ENCODE measurements at regions of chr1 and their contacts with region 1.

Region 1: DNA sequence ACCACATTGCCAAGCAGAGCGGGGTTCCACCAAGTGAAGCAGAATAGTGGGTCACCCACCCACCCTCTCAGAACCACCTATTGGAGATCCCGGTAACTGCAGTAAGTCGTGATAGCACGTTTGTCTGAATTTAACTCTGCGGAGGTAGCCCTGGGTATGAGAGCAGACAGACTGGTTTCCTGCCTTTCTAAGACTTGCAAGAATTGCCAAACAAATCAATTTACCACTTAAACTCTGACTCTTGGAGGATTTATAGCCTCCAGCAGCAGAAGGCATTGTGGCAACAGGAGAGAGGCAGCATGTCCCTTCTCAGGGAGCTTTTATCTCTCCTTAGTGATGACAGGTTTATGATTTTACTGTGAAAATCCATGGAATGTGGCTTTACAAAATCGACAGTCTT is 287.9 kb upstream of the FMN2 start:
- DNase-seq: no peak
- ATAC-seq: no peak
- H3K4me3 ChIP-seq: no peak overlapping the region
- H3K4me3 Mint-ChIP-seq: no peak overlapping the region
- H3K27ac ChIP-seq: no peak overlapping the region
- H3K27ac Mint-ChIP-seq: peak overlapping the region in 1 of 9 donors; percentile 4
- H3K4me1 ChIP-seq: no peaks in the 10 kb centered on the region
- H3K4me1 Mint-ChIP-seq: peaks cover 2 to 21% (median 11%) of the 10 kb centered on the region in 7 donors
- H3K27me3 ChIP-seq: no peaks in the 10 kb centered on the region
- H3K27me3 Mint-ChIP-seq: no peaks in the 10 kb centered on the region

Region 2: DNA sequence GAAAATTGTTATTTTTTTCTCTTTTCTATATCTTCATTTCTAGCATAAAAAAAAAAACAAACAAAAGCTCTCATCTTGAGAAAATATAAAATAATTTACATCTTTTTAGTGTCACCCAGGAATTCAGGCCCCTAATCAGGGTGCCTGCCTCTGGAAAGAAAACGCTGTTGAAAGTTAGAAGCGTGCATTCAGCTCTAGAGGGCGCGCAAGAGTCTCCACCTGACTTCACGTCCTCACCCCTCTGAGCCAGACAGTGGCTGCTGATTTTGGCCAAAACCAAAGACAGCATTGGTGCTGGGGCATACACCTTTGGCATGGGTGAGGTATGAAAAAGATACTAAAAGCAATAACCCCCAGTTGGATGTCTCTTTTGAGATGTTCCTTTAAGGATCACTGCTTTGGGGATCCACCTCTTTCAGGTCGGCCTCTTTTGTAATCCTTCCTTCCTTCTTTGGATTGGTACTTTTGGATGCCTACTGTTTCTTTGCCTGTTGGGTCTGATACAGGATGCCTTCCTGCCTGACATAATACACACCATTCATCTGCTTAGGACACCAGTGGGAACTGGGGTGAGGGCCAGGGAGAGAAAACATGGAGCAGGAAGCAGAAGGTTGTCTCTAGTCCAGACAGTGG is 495.0 kb before region 1 on chr1:
- CTCF ChIA-PET with region 1: no interaction called
- POLR2A ChIA-PET with region 1: no interaction called
- intact Hi-C with region 1: loop called in 1 of 2 experiments (anchors 1 kb)
- DNase-seq: peak in 5 of 9 donors; percentile 3 to 19 (median 7)
- ATAC-seq: peak; percentile 51
- H3K4me3 ChIP-seq: no peak overlapping the region
- H3K4me3 Mint-ChIP-seq: no peak overlapping the region
- H3K27ac ChIP-seq: no peak overlapping the region
- H3K27ac Mint-ChIP-seq: no peak overlapping the region
- H3K4me1 ChIP-seq: no peaks in the 10 kb centered on the region
- H3K4me1 Mint-ChIP-seq: no peaks in the 10 kb centered on the region
- H3K27me3 ChIP-seq: no peaks in the 10 kb centered on the region
- H3K27me3 Mint-ChIP-seq: peaks cover 0 to 7% (median 0%) of the 10 kb centered on the region in 5 donors

Region 3: GRCh38 chr1:239587066-239587465 is 216.7 kb before region 1 on chr1:
- CTCF ChIA-PET with region 1: interaction called, 4 read pairs
- POLR2A ChIA-PET with region 1: no interaction called
- intact Hi-C with region 1: loop called in 1 of 2 experiments (anchors 1 kb)
- DNase-seq: peak in 7 of 9 donors; percentile 37 to 65 (median 54)
- ATAC-seq: peak; percentile 95
- H3K4me3 ChIP-seq: no peak overlapping the region
- H3K4me3 Mint-ChIP-seq: peak overlapping the region in 3 of 10 donors; percentile 14 to 26 (median 23)
- H3K27ac ChIP-seq: no peak overlapping the region
- H3K27ac Mint-ChIP-seq: peak overlapping the region in 6 of 9 donors; percentile 3 to 60 (median 40)
- H3K4me1 ChIP-seq: peaks cover 0 to 5% of the 10 kb centered on the region in 2 donors
- H3K4me1 Mint-ChIP-seq: peaks cover 5 to 17% (median 11%) of the 10 kb centered on the region in 7 donors
- H3K27me3 ChIP-seq: no peaks in the 10 kb centered on the region
- H3K27me3 Mint-ChIP-seq: peaks cover 0 to 9% (median 0%) of the 10 kb centered on the region in 5 donors

Region 4: GRCh38 chr1:239757711-239758110 is 46.1 kb before region 1 on chr1:
- CTCF ChIA-PET with region 1: no interaction called
- POLR2A ChIA-PET with region 1: no interaction called
- intact Hi-C with region 1: no loop called
- DNase-seq: no peak
- ATAC-seq: no peak
- H3K4me3 ChIP-seq: no peak overlapping the region
- H3K4me3 Mint-ChIP-seq: no peak overlapping the region
- H3K27ac ChIP-seq: no peak overlapping the region
- H3K27ac Mint-ChIP-seq: peak overlapping the region in 1 of 9 donors; percentile 36
- H3K4me1 ChIP-seq: no peaks in the 10 kb centered on the region
- H3K4me1 Mint-ChIP-seq: peaks cover 0 to 9% (median 0%) of the 10 kb centered on the region in 7 donors
- H3K27me3 ChIP-seq: no peaks in the 10 kb centered on the region
- H3K27me3 Mint-ChIP-seq: peaks cover 0 to 10% (median 0%) of the 10 kb centered on the region in 5 donors

Region 5: DNA sequence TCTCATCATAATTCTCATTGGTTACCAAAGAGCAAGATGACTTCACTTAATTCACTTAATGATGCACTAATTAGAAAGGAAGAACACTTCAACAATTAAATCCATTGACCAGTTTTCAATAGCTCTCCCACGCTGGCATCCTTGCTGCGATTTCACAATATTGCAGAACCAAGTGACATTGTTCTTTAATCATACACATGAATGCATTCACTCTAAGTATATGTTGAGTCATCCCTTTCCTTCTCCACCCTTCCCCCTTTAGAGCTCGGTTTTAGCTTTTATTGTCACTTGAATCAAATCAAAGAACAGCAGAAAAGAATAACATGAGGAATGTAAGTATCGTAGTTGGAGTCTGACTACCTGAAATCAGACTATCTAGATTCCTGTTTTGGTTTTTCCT is 54.3 kb after region 1 on chr1:
- CTCF ChIA-PET with region 1: no interaction called
- POLR2A ChIA-PET with region 1: no interaction called
- intact Hi-C with region 1: no loop called
- DNase-seq: no peak
- ATAC-seq: peak; percentile 51
- H3K4me3 ChIP-seq: no peak overlapping the region
- H3K4me3 Mint-ChIP-seq: no peak overlapping the region
- H3K27ac ChIP-seq: no peak overlapping the region
- H3K27ac Mint-ChIP-seq: no peak overlapping the region
- H3K4me1 ChIP-seq: no peaks in the 10 kb centered on the region
- H3K4me1 Mint-ChIP-seq: peaks cover 0 to 2% (median 0%) of the 10 kb centered on the region in 7 donors
- H3K27me3 ChIP-seq: no peaks in the 10 kb centered on the region
- H3K27me3 Mint-ChIP-seq: no peaks in the 10 kb centered on the region